Esophagus muscularis mucosa (tissue), 4 donors: ENCODE measurements at regions of chr22 and their contacts with region 1.

Region 1: DNA sequence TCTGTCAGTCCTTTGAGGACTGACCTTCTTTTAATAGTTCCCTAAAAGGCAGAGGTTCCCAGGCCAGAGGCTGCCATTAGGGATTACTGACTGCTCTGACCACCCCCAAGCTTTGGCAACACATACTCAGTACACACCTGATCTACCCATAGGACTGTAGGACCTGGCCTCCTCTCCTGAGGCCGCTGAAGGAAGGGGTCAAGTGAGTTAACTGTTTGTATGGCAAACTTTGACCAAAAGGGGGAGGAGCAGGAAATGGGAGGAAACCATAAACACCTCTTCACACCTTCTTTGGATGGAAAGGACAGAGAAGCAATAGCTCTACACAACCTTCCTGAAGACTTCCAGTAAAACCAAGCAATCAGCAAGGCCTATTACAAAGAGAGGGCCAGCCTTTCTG is 104.0 kb downstream of the APOL5 start:
- DNase-seq: no peak
- H3K4me3 ChIP-seq: no peak overlapping the region
- H3K27ac ChIP-seq: no peak overlapping the region
- H3K4me1 ChIP-seq: peaks cover 33 to 76% (median 52%) of the 10 kb centered on the region in 4 donors
- H3K27me3 ChIP-seq: no peaks in the 10 kb centered on the region
- CTCF ChIP-seq: no peak
- EP300 ChIP-seq: no peak
- POLR2A ChIP-seq: no peak

Region 2: GRCh38 chr22:35367301-35367886 is 454.3 kb before region 1 on chr22:
- intact Hi-C with region 1: no loop called
- DNase-seq: no peak
- H3K4me3 ChIP-seq: no peak overlapping the region
- H3K27ac ChIP-seq: no peak overlapping the region
- H3K4me1 ChIP-seq: peaks cover 7 to 16% (median 13%) of the 10 kb centered on the region in 4 donors
- H3K27me3 ChIP-seq: peaks cover 0 to 47% (median 2%) of the 10 kb centered on the region in 4 donors
- CTCF ChIP-seq: no peak
- EP300 ChIP-seq: no peak
- POLR2A ChIP-seq: no peak

Region 3: DNA sequence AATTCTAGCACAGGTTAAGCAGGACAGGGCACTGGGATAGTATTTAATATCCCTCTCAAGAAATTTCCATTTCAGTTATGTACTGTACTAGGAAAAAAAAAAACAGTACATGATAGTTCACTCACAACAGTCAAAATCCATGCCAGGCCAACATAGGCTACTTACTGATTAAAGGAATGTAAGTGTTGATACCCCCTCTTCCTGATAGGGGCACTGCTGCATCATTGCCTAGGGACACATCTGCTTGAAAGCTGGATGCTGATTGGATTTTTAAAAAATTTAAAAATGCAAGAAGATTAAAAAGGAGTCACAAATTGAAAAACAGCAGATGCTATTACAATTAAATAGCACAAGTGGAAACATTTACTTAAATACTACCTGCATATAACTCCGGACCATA is 60.6 kb before region 1 on chr22:
- intact Hi-C with region 1: loop called (anchors 10 kb)
- DNase-seq: no peak
- H3K4me3 ChIP-seq: no peak overlapping the region
- H3K27ac ChIP-seq: no peak overlapping the region
- H3K4me1 ChIP-seq: peaks cover 0 to 4% (median 2%) of the 10 kb centered on the region in 4 donors
- H3K27me3 ChIP-seq: no peaks in the 10 kb centered on the region
- CTCF ChIP-seq: peak in 2 of 3 experiments; percentile 26 to 32
- EP300 ChIP-seq: no peak
- POLR2A ChIP-seq: no peak

Region 4: GRCh38 chr22:35842954-35843353 is 21.3 kb after region 1 on chr22:
- intact Hi-C with region 1: no loop called
- DNase-seq: no peak
- H3K4me3 ChIP-seq: no peak overlapping the region
- H3K27ac ChIP-seq: peak overlapping the region; percentile 20 to 45 (median 34)
- H3K4me1 ChIP-seq: peaks cover 44 to 59% (median 55%) of the 10 kb centered on the region in 4 donors
- H3K27me3 ChIP-seq: no peaks in the 10 kb centered on the region
- CTCF ChIP-seq: peak in 2 of 3 experiments; percentile 44 to 51
- EP300 ChIP-seq: no peak
- POLR2A ChIP-seq: no peak

Region 5: GRCh38 chr22:35914665-35915476 is 93.2 kb after region 1 on chr22:
- intact Hi-C with region 1: no loop called
- DNase-seq: no peak
- H3K4me3 ChIP-seq: peak overlapping the region; percentile 40 to 63 (median 57)
- H3K27ac ChIP-seq: peak overlapping the region; percentile 75 to 82 (median 80)
- H3K4me1 ChIP-seq: peaks cover 72 to 99% (median 96%) of the 10 kb centered on the region in 4 donors
- H3K27me3 ChIP-seq: no peaks in the 10 kb centered on the region
- CTCF ChIP-seq: no peak
- EP300 ChIP-seq: no peak
- POLR2A ChIP-seq: no peak